Vagina (tissue), 2 donors: ENCODE measurements at regions of chr7 and their contacts with region 1.

Region 1: DNA sequence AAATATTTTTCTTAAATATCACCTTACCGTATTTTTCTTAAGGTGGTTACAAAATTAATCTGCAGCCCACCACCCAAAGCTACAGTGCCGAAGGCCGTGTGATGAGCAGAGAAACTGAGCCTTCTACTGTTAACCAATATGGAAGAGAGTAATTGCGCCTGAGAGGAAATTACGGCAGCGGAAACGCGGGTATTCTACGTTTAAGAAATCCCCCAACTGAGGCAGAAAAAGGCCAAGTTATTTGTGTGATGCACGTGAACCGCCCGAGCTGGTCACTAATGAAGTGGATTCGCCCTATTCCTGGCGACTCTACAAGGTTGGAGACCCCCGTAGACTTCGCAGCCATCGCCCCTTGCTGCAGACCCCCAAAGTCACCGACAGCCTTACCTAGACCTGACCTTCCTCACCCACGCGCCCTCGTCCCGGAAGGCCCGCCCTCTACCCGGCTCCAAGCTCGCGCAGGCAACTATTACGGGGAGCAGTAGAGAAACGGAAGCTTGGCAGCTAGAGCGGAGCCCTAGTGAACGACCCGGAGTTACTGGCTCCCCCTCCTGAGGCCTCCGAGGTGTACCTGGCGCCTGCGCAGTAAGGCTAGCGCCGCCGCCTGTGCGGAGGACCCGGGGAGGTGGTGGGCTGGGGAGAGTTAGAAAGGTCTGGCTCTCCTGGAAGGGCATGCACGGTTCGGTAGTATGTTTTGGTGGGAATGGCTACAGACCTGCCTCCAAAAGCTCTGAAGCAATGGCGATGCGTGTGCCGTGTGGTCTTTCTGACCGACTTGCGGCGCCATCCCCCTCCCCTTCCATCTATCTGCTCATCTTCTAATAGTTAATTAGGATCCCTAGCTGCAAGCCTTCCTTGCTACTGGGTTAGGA is at the start of gene MRPS33:
- DNase-seq: peak; percentile 96
- H3K4me3 ChIP-seq: peak within 1 kb of the TSS; percentile 52 to 54
- H3K27ac ChIP-seq: peak within 1 kb of the TSS; percentile 80
- H3K4me1 ChIP-seq: peaks cover 23% of the 10 kb centered on the region
- H3K27me3 ChIP-seq: no peaks in the 10 kb centered on the region
- CTCF ChIP-seq: peak in 2 of 3 experiments; percentile 34 to 70
- POLR2A ChIP-seq: peak in 1 of 2 donors; percentile 47
- total RNA-seq, gene MRPS33: 5.9 TPM

Region 2: DNA sequence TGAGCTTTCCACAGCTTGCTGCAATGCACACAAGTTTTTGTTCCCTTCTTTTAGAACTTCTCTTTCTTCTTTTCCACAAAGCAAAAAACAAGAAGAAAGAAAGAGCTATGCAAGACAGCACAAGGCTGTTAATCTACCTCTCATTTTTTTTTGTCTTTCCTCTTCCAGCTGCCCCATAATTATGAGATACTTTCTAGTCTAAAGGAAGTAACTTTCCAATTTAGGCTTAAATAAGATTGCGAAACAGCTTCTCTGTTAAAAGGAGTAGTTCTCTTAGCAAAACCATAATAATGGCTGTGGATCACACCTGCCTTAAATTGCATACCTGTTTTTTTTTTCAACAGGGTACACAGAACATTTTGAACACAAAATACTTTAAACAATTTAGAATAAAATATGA is 262.2 kb before region 1 on chr7:
- intact Hi-C with region 1: no loop called
- DNase-seq: no peak
- H3K4me3 ChIP-seq: no peak overlapping the region
- H3K27ac ChIP-seq: no peak overlapping the region
- H3K4me1 ChIP-seq: no peaks in the 10 kb centered on the region
- H3K27me3 ChIP-seq: no peaks in the 10 kb centered on the region
- CTCF ChIP-seq: no peak
- POLR2A ChIP-seq: no peak

Region 3: DNA sequence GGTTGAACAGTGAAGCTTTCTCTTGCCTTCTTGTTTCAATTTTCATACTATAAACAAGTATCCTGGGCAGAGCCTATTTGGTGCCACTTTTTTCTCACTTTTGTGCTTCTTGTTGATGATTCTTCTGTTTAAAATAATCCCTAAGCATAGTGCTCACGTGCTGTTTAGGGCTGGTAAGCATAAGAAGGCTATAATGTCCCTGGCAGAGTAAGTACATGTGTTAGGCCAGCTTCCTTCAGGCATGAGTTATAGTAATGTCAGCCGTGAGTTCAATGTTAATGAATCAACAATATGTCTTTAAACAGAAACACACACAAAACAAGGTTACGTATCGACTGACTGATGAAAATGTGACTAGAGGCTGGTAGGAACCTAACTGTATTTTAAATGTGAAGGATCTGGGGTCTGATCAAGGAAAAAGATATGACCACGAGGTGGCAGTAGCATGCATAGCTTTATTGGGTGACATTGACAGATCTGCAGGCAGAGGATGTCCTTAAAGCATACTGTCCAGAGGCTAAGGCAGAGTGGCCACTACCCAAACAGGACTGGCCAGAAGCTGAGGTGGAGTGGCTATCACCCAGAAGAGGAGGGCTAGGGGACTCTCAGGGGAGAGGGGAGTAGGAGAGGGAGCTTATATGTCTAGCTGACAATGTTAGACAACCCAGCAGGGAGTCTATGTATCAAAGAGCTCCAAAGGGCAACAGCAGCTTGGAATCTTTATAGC is 203.8 kb before region 1 on chr7:
- intact Hi-C with region 1: loop called (anchors 10 kb)
- DNase-seq: no peak
- H3K4me3 ChIP-seq: no peak overlapping the region
- H3K27ac ChIP-seq: no peak overlapping the region
- H3K4me1 ChIP-seq: no peaks in the 10 kb centered on the region
- H3K27me3 ChIP-seq: no peaks in the 10 kb centered on the region
- CTCF ChIP-seq: peak; percentile 1 to 54 (median 51)
- POLR2A ChIP-seq: no peak

Region 4: GRCh38 chr7:141027043-141027442 is 12.3 kb after region 1 on chr7:
- intact Hi-C with region 1: loop called (anchors 1 kb)
- DNase-seq: no peak
- H3K4me3 ChIP-seq: no peak overlapping the region
- H3K27ac ChIP-seq: no peak overlapping the region
- H3K4me1 ChIP-seq: no peaks in the 10 kb centered on the region
- H3K27me3 ChIP-seq: no peaks in the 10 kb centered on the region
- CTCF ChIP-seq: no peak
- POLR2A ChIP-seq: no peak

Region 5: DNA sequence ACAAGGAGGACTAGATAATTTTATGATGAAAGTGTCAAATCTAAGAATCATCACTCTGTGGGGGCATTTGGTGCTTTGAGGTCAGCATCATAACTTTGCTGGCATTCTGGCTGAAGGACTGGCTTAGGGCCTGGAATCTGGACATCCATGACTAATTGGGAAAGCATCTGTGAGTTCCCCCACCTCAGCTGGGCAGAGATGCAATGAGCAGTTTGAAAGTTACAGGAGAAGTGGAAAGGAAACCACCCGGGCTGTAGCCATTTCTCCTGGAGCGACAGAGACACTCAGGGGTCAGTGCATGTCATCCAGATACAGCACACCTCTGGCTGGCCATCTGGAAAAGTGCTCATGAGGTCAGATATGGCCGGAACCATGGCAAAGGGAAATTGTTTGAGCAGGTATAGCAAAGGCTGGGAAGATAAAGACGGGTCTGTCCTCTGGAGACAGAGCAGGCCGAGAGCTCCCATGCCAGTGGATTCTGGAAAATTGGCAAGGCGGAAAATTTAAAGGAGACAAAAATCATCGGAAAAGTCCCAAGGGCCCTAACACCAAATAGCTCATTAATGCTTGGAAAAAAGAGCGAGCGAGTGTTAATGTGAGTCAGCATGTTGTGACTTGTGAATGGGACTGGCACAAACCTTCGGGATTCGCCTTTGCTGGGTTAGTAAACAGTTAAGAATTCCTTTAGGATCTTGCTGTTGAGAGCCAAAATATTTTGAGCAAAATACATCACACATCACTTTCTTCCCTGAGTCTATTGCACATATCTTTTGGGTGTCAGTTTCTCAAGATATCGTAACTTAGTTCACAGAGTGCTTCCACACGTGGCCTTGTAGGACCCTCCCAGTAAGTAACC is 348.0 kb after region 1 on chr7:
- intact Hi-C with region 1: no loop called
- DNase-seq: no peak
- H3K4me3 ChIP-seq: no peak overlapping the region
- H3K27ac ChIP-seq: no peak overlapping the region
- H3K4me1 ChIP-seq: no peaks in the 10 kb centered on the region
- H3K27me3 ChIP-seq: no peaks in the 10 kb centered on the region
- CTCF ChIP-seq: no peak
- POLR2A ChIP-seq: no peak